ENCODE measurements at regions of chr16 and their contacts with region 1.

Region 1: GRCh38 chr16:9134739-9135138 is 43.3 kb downstream of the HAPSTR1 start:
- DNase-seq: peak; percentile 67 to 69
- ATAC-seq: peak; percentile 85 to 90
- H3K4me3 ChIP-seq: no peak overlapping the region
- H3K27ac ChIP-seq: peak overlapping the region in 1 of 2 experiments; percentile 61; a peak in 3 of 6 replicates
- H3K4me1 ChIP-seq: peaks cover 8% of the 10 kb centered on the region; the same call in 1 of the 3 replicates
- CTCF ChIP-seq: peak; percentile 77
- EP300 ChIP-seq: no peak
- POLR2A ChIP-seq: no peak
- RAD21 ChIP-seq: peak; percentile 88 to 91

Region 2: GRCh38 chr16:8936421-8936820 is 198.3 kb before region 1 on chr16:
- CTCF ChIA-PET with region 1: interaction called, 10 read pairs
- POLR2A ChIA-PET with region 1: no interaction called
- DNase-seq: peak; percentile 56 to 69
- ATAC-seq: peak; percentile 96 to 98
- H3K4me3 ChIP-seq: no peak overlapping the region
- H3K27ac ChIP-seq: no peak overlapping the region
- H3K4me1 ChIP-seq: peaks cover 11% of the 10 kb centered on the region; the same call in 2 of the 3 replicates
- CTCF ChIP-seq: peak; percentile 39
- EP300 ChIP-seq: no peak
- POLR2A ChIP-seq: no peak
- RAD21 ChIP-seq: peak in 1 of 2 experiments; percentile 38; a peak in 3 of 5 replicates

Region 3: DNA sequence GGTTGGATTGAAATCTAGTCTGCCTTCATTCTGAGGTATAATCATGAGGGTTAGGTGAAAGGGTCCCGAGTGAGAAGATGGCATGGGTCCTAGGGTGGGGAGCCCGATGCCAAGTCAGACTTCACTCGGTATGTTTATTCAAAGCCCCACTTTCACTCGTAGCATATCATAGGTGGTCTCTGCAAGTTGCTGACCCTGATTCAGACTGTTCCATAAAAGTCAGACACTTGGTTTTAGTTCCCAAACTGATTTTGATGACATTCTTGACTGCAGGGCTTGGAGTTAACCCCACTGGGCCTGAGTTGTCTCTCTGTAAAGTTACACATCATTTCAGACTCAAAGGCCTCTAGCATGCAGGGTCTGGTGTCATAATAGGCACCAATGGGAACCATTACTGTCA is 25.5 kb before region 1 on chr16:
- CTCF ChIA-PET with region 1: interaction called, 11 read pairs
- POLR2A ChIA-PET with region 1: no interaction called
- DNase-seq: no peak
- ATAC-seq: no peak
- H3K4me3 ChIP-seq: no peak overlapping the region
- H3K27ac ChIP-seq: no peak overlapping the region
- H3K4me1 ChIP-seq: peaks cover 73% of the 10 kb centered on the region
- CTCF ChIP-seq: no peak
- EP300 ChIP-seq: no peak
- POLR2A ChIP-seq: no peak
- RAD21 ChIP-seq: no peak

Region 4: GRCh38 chr16:9123871-9124270 is 10.9 kb before region 1 on chr16:
- CTCF ChIA-PET with region 1: interaction called, 24 read pairs
- POLR2A ChIA-PET with region 1: no interaction called
- DNase-seq: peak; percentile 80 to 86
- ATAC-seq: peak; percentile 51 to 54; a peak in 5 of 6 replicates
- H3K4me3 ChIP-seq: no peak overlapping the region
- H3K27ac ChIP-seq: peak overlapping the region; percentile 69 to 87
- H3K4me1 ChIP-seq: peaks cover 75% of the 10 kb centered on the region
- CTCF ChIP-seq: no peak
- EP300 ChIP-seq: no peak
- POLR2A ChIP-seq: no peak
- RAD21 ChIP-seq: no peak

Region 5: GRCh38 chr16:9151597-9151996 is 16.9 kb after region 1 on chr16:
- CTCF ChIA-PET with region 1: interaction called, 41 read pairs
- POLR2A ChIA-PET with region 1: no interaction called
- DNase-seq: peak in 1 of 2 experiments; percentile 13
- ATAC-seq: peak; percentile 26 to 48; a peak in 2 of 6 replicates
- H3K4me3 ChIP-seq: no peak overlapping the region
- H3K27ac ChIP-seq: no peak overlapping the region
- H3K4me1 ChIP-seq: no peaks in the 10 kb centered on the region
- CTCF ChIP-seq: no peak
- EP300 ChIP-seq: no peak
- POLR2A ChIP-seq: no peak
- RAD21 ChIP-seq: no peak

Measured in A549 (cell line).